Cardiac septum (tissue), 1 donor: ENCODE measurements at regions of chr22 and their contacts with region 1.

Region 1: DNA sequence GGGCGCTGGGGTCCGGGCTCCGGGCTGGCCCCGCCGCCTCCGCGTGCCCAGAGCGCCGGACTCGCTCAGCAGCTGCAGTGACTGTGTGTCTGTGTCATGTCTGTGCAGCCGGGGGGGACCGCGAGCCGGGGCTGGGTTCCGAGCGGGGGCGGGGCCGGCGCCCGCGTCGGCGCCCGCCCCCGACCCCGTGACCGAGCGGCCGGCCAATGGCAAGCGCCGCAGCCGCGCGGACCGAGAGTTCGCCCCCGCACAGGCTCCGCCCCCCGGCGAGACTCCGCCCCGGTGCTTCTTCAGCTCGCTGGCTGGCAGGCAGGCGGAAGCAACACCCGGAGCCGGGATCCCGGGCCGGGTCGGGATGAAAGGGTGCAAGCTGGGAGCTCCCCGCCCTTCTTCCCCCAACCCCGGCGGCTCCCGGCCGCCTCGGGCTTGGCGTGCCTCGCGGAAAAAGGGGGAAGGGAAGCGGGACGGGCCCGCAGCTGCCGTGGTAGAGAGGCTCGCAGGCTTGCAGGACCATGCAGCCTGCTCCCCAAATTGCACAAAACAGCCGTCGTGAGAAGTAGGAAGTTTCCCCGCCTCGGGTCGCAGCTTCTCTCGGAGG is 750 bp upstream of the LARGE1 start:
- DNase-seq: peak; percentile 97

Region 2: GRCh38 chr22:33529424-33530113 is 391.5 kb before region 1 on chr22:
- intact Hi-C with region 1: loop called (anchors 10 kb)
- DNase-seq: no peak

Region 3: GRCh38 chr22:33658775-33659174 is 262.3 kb before region 1 on chr22:
- intact Hi-C with region 1: loop called (anchors 5 kb)
- DNase-seq: no peak

Region 4: GRCh38 chr22:33781411-33781810 is 139.6 kb before region 1 on chr22:
- intact Hi-C with region 1: loop called (anchors 5 kb)
- DNase-seq: no peak

Region 5: GRCh38 chr22:33882991-33883960 is 37.8 kb before region 1 on chr22:
- intact Hi-C with region 1: no loop called
- DNase-seq: peak; percentile 33

Region 6: DNA sequence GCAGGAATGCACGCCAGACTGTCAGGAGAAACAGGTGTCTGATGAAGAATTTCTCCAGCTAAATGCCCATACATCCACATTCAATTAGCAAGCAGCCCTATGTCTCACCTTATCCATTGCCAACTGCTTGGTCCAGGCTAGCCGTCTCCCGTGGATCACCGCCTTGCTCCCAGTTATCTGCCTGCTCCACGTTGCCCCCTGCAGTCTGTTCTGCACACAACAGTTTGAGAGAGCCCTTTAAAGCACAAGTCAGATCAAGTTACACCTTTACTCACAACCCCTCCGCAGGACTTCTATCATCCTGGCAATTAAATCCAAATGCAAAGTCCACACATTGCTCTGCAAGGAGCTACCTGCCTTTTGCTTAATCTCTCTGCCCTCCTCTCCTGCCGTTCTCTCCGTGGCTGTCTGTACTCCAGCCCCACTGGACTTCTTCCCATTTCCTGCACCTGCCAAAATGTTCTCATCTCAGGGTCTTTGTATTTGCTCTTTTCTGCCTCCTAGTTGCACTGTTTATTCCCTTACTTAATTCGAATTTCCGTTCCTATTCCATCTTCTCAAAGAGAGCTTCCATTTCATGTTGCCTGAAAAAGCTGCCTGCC is 184.5 kb after region 1 on chr22:
- intact Hi-C with region 1: loop called (anchors 5 kb)
- DNase-seq: no peak